IMR-90 (cell line): ENCODE measurements at regions of chr18 and their contacts with region 1.

Region 1: GRCh38 chr18:32470713-32471633 is at the start of gene GAREM1:
- DNase-seq: peak; percentile 98
- ATAC-seq: peak; percentile 95
- H3K4me3 ChIP-seq: peak within 1 kb of the TSS; percentile 88
- H3K27ac ChIP-seq: peak within 1 kb of the TSS; percentile 60
- H3K4me1 ChIP-seq: peaks cover 1% of the 10 kb centered on the region
- H3K27me3 ChIP-seq: peaks cover 5% of the 10 kb centered on the region
- CTCF ChIP-seq: peak; percentile 95
- POLR2A ChIP-seq: peak; percentile 70
- RAD21 ChIP-seq: peak; percentile 94
- total RNA-seq, gene GAREM1: 1.9 and 2.3 TPM in 2 replicates

Region 2: GRCh38 chr18:32158108-32158624 is 312.8 kb before region 1 on chr18:
- CTCF ChIA-PET with region 1: interaction called, 12 read pairs
- POLR2A ChIA-PET with region 1: no interaction called
- dilution Hi-C with region 1: no loop called
- in situ Hi-C with region 1: no loop called
- intact Hi-C with region 1: loop called (anchors 1 kb)
- DNase-seq: peak; percentile 89
- ATAC-seq: peak; percentile 100
- H3K4me3 ChIP-seq: no peak overlapping the region
- H3K27ac ChIP-seq: no peak overlapping the region
- H3K4me1 ChIP-seq: no peaks in the 10 kb centered on the region
- H3K27me3 ChIP-seq: no peaks in the 10 kb centered on the region; the same call in none of the 2 replicates
- CTCF ChIP-seq: peak; percentile 94
- POLR2A ChIP-seq: no peak
- RAD21 ChIP-seq: peak; percentile 92

Region 3: GRCh38 chr18:32276906-32277305 is 194.1 kb before region 1 on chr18:
- CTCF ChIA-PET with region 1: interaction called, 63 read pairs
- POLR2A ChIA-PET with region 1: interaction called, 3 read pairs
- dilution Hi-C with region 1: loop called (anchors 25 kb)
- in situ Hi-C with region 1: loop called (anchors 5 kb)
- intact Hi-C with region 1: no loop called
- DNase-seq: no peak
- ATAC-seq: no peak
- H3K4me3 ChIP-seq: no peak overlapping the region
- H3K27ac ChIP-seq: no peak overlapping the region
- H3K4me1 ChIP-seq: no peaks in the 10 kb centered on the region
- H3K27me3 ChIP-seq: no peaks in the 10 kb centered on the region
- CTCF ChIP-seq: no peak
- POLR2A ChIP-seq: no peak
- RAD21 ChIP-seq: no peak

Region 4: GRCh38 chr18:32326450-32327309 is 144.3 kb before region 1 on chr18:
- CTCF ChIA-PET with region 1: interaction called, 12 read pairs
- POLR2A ChIA-PET with region 1: no interaction called
- dilution Hi-C with region 1: no loop called
- in situ Hi-C with region 1: no loop called
- intact Hi-C with region 1: no loop called
- DNase-seq: peak; percentile 55
- ATAC-seq: peak; percentile 81
- H3K4me3 ChIP-seq: no peak overlapping the region
- H3K27ac ChIP-seq: peak overlapping the region; percentile 11; the same call in 1 of the 2 replicates
- H3K4me1 ChIP-seq: peaks cover 10% of the 10 kb centered on the region
- H3K27me3 ChIP-seq: no peaks in the 10 kb centered on the region
- CTCF ChIP-seq: no peak
- POLR2A ChIP-seq: no peak
- RAD21 ChIP-seq: no peak

Region 5: GRCh38 chr18:32383050-32383819 is 87.7 kb before region 1 on chr18:
- CTCF ChIA-PET with region 1: interaction called, 3 read pairs
- POLR2A ChIA-PET with region 1: no interaction called
- dilution Hi-C with region 1: no loop called
- in situ Hi-C with region 1: no loop called
- intact Hi-C with region 1: loop called (anchors 2 kb)
- DNase-seq: peak; percentile 98
- ATAC-seq: peak; percentile 90
- H3K4me3 ChIP-seq: no peak overlapping the region
- H3K27ac ChIP-seq: no peak overlapping the region
- H3K4me1 ChIP-seq: peaks cover 8% of the 10 kb centered on the region; the same call in 1 of the 2 replicates
- H3K27me3 ChIP-seq: no peaks in the 10 kb centered on the region
- CTCF ChIP-seq: no peak
- POLR2A ChIP-seq: no peak
- RAD21 ChIP-seq: no peak

Region 6: DNA sequence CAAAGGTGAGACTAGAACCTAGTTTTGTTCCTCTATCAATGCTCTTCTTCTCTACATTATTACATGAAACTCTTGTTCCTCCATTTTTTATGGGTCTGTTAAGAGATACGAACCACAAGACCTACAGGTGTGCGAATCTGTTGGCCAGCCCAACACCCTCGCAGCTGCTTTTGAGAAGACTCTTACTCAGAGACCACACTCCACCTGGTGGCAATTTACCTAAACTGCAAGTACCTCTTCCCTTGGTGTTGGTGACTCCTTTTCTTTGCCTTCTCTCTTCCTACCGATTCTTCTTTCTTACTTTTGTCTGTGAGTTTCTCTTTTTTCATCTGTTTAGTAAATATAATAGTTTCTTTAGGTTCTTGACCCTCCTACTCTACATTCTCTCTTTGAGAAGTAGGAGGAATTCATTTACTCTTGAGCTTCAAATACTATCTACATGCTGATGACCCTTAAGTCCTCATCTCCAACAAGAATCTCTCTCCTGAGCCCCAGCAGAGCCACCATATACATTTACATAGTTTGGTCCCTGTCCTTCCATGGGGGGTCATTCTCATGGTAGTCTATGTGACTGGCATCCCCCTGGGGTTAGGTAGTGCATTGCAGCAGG is 81.6 kb after region 1 on chr18:
- CTCF ChIA-PET with region 1: interaction called, 4 read pairs
- POLR2A ChIA-PET with region 1: no interaction called
- dilution Hi-C with region 1: no loop called
- in situ Hi-C with region 1: no loop called
- intact Hi-C with region 1: loop called (anchors 1 kb)
- DNase-seq: peak; percentile 69
- ATAC-seq: peak; percentile 80
- H3K4me3 ChIP-seq: no peak overlapping the region
- H3K27ac ChIP-seq: no peak overlapping the region
- H3K4me1 ChIP-seq: no peaks in the 10 kb centered on the region
- H3K27me3 ChIP-seq: no peaks in the 10 kb centered on the region
- CTCF ChIP-seq: peak; percentile 78
- POLR2A ChIP-seq: no peak
- RAD21 ChIP-seq: peak; percentile 79

Region 7: DNA sequence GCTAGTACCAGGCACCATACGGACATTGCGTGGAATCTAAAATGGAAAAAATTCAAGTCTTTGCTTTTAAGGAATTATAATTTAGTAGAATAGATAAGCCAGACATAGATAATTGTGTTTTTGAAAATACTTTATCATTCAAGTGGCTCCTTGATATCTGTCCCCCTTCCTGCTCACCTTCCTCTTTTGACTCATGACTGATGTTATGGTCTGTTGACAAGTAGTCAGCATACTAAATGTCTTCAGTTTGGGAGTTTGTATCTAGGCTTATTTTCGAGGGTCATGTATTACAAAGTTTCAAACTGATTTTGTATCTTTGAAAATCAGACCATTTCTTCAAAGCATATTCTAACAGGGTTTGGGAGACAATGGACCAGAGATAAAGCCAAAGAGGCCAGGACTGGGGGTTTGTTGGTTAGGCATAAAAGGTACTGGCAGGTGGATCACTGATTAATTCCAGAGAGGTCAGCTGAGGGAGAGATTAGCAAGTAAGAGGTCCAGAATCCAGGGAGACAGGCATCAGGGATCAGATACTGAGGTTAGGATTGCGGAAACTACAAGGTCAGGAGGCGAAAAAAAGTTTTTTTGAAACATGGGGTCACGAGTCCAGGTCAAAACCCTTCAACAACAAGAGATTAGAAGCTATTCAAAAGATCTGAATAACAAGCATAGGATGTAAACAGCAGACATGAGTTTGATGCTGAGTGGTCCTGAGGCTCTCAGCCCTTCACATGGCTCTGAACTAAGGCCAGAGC is 333.3 kb after region 1 on chr18:
- CTCF ChIA-PET with region 1: no interaction called
- POLR2A ChIA-PET with region 1: no interaction called
- dilution Hi-C with region 1: no loop called
- in situ Hi-C with region 1: no loop called
- intact Hi-C with region 1: no loop called
- DNase-seq: no peak
- ATAC-seq: no peak
- H3K4me3 ChIP-seq: no peak overlapping the region
- H3K27ac ChIP-seq: no peak overlapping the region
- H3K4me1 ChIP-seq: no peaks in the 10 kb centered on the region
- H3K27me3 ChIP-seq: no peaks in the 10 kb centered on the region
- CTCF ChIP-seq: no peak
- POLR2A ChIP-seq: no peak
- RAD21 ChIP-seq: no peak

Region 8: DNA sequence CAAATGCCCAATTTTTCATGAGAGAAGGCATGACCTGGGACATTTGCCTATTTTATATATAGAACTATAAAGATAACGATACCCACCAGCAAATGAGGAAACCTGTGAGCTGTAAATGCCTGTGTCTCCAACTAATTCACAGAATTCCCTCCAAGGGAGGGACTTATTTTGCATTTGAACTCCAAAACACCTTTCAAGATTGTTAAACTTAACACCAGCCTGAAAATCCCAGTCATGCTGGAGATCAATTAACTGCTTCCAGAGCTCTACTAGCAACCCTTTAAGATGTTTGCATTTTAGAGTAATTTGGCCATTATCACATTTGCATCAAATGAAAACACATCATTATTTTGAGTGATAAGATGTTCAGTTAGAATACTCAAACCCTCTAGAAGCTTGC is 370.0 kb after region 1 on chr18:
- CTCF ChIA-PET with region 1: no interaction called
- POLR2A ChIA-PET with region 1: no interaction called
- dilution Hi-C with region 1: no loop called
- in situ Hi-C with region 1: no loop called
- intact Hi-C with region 1: no loop called
- DNase-seq: no peak
- ATAC-seq: no peak
- H3K4me3 ChIP-seq: no peak overlapping the region
- H3K27ac ChIP-seq: no peak overlapping the region
- H3K4me1 ChIP-seq: no peaks in the 10 kb centered on the region
- H3K27me3 ChIP-seq: no peaks in the 10 kb centered on the region
- CTCF ChIP-seq: no peak
- POLR2A ChIP-seq: no peak
- RAD21 ChIP-seq: no peak